ENCODE measurements at regions of chr2 and their contacts with region 1.

Region 1: GRCh38 chr2:189569295-189569910 is 11.2 kb downstream of the SLC40A1 start:
- DNase-seq: peak in 1 of 2 donors; percentile 73
- H3K4me3 ChIP-seq: peak overlapping the region; percentile 0 to 24
- H3K27ac ChIP-seq: peak overlapping the region; percentile 86 to 89
- H3K4me1 ChIP-seq: peaks cover 16 to 85% of the 10 kb centered on the region in 2 donors
- H3K27me3 ChIP-seq: no peaks in the 10 kb centered on the region
- CTCF ChIP-seq: peak in 2 of 3 experiments; percentile 19 to 51

Region 2: GRCh38 chr2:189498205-189498604 is 71.2 kb before region 1 on chr2:
- intact Hi-C with region 1: no loop called
- DNase-seq: no peak
- H3K4me3 ChIP-seq: no peak overlapping the region
- H3K27ac ChIP-seq: no peak overlapping the region
- H3K4me1 ChIP-seq: no peaks in the 10 kb centered on the region
- H3K27me3 ChIP-seq: no peaks in the 10 kb centered on the region
- CTCF ChIP-seq: peak in 1 of 3 experiments; percentile 48

Region 3: GRCh38 chr2:189534854-189535832 is 34.3 kb before region 1 on chr2:
- intact Hi-C with region 1: loop called (anchors 5 kb)
- DNase-seq: no peak
- H3K4me3 ChIP-seq: no peak overlapping the region
- H3K27ac ChIP-seq: peak overlapping the region; percentile 68 to 70
- H3K4me1 ChIP-seq: peaks cover 5 to 9% of the 10 kb centered on the region in 2 donors
- H3K27me3 ChIP-seq: no peaks in the 10 kb centered on the region
- CTCF ChIP-seq: no peak

Measured in ascending aorta (tissue), 2 donors.